Aorta (tissue), 5 donors: ENCODE measurements at regions of chr1 and their contacts with region 1.

Region 1: DNA sequence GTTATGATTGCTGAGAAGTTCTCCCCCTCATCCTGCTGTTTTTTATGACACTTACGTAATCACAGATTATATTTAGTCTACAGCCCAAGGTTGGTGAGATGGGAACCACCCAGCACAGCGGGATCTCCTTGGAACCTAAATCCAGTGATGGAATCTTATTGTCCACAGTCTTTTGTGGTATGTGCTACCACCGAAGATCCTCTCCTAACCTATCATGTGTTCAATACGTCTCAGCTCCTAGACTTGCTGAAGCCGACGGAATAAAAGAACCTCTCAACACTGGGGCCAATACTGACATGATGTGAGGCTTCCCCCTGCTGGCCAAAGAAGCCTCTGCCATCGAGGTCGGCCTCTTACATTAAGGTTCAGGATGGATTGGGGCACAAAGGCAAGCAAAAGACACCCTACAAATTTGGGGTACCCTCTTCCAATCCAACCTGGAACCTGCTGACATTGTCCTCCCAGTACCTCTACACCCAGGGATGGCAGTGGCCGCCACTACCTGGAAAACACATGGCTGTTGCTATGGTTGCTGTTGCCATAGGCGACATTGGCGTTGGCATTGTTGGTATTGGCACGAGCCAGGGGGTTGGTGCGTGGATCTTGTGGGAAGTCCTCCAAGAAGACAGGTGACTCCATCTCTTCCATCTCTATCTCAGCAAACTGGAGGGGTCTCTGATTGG is 19.4 kb upstream of the KIF21B start:
- DNase-seq: peak in 1 of 2 donors; percentile 64
- ATAC-seq: peak; percentile 85
- H3K4me3 ChIP-seq: no peak overlapping the region
- H3K27ac ChIP-seq: no peak overlapping the region
- H3K4me1 ChIP-seq: no peaks in the 10 kb centered on the region
- H3K27me3 ChIP-seq: no peaks in the 10 kb centered on the region

Region 2: GRCh38 chr1:200558866-200559459 is 484.0 kb before region 1 on chr1:
- intact Hi-C with region 1: loop called in 1 of 2 experiments (anchors 5 kb)
- DNase-seq: no peak
- ATAC-seq: no peak
- H3K4me3 ChIP-seq: no peak overlapping the region
- H3K27ac ChIP-seq: no peak overlapping the region
- H3K4me1 ChIP-seq: no peaks in the 10 kb centered on the region
- H3K27me3 ChIP-seq: no peaks in the 10 kb centered on the region